PC-3 (cell line): ENCODE measurements at regions of chr5 and their contacts with region 1.

Region 1: GRCh38 chr5:157743163-157744050 is at the start of gene LSM11:
- DNase-seq: peak; percentile 97
- ATAC-seq: peak; percentile 88
- H3K4me3 ChIP-seq: peak within 1 kb of the TSS; percentile 89
- H3K27ac ChIP-seq: no peak within 1 kb of the TSS
- H3K4me1 ChIP-seq: peaks cover 28% of the 10 kb centered on the region
- H3K27me3 ChIP-seq: no peaks in the 10 kb centered on the region
- CTCF ChIP-seq: peak; percentile 100
- total RNA-seq, gene LSM11: 5.0 and 5.1 TPM in 2 replicates

Region 2: GRCh38 chr5:157148734-157149615 is 594.4 kb before region 1 on chr5:
- CTCF ChIA-PET with region 1: no interaction called
- POLR2A ChIA-PET with region 1: no interaction called
- intact Hi-C with region 1: loop called (anchors 5 kb)
- DNase-seq: peak; percentile 95
- ATAC-seq: peak; percentile 95
- H3K4me3 ChIP-seq: no peak overlapping the region
- H3K27ac ChIP-seq: no peak overlapping the region
- H3K4me1 ChIP-seq: no peaks in the 10 kb centered on the region
- H3K27me3 ChIP-seq: peaks cover 11% of the 10 kb centered on the region; the same call in 1 of the 2 replicates
- CTCF ChIP-seq: peak; percentile 99

Region 3: DNA sequence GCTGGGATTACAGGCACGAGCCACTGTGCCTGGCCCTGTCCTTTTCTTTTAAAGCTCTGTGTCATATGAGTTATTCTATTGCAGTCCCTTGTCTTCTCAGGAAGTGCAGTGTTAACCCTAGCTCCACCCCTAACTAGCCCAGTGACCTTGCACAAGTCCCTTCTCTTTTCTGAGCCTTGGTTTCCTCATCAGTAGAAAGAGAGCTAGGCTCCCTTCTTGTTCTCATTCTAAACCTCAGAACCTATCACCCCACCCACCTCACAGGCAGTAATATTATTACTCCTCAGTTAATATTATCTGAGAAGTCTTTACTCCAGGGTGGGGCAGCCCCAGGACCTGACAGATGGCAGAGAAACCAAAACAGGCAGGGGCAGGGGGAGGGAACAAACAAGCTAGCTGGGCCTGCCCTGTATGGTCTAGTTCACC is 470.3 kb before region 1 on chr5:
- CTCF ChIA-PET with region 1: no interaction called
- POLR2A ChIA-PET with region 1: no interaction called
- intact Hi-C with region 1: no loop called
- DNase-seq: no peak
- ATAC-seq: peak; percentile 34; the same call in 1 of the 2 replicates
- H3K4me3 ChIP-seq: no peak overlapping the region
- H3K27ac ChIP-seq: no peak overlapping the region
- H3K4me1 ChIP-seq: no peaks in the 10 kb centered on the region
- H3K27me3 ChIP-seq: no peaks in the 10 kb centered on the region
- CTCF ChIP-seq: no peak

Region 4: GRCh38 chr5:157328277-157328912 is 415.0 kb before region 1 on chr5:
- CTCF ChIA-PET with region 1: interaction called, 16 read pairs
- POLR2A ChIA-PET with region 1: no interaction called
- intact Hi-C with region 1: loop called (anchors 1 kb)
- DNase-seq: peak; percentile 90
- ATAC-seq: peak; percentile 100
- H3K4me3 ChIP-seq: peak overlapping the region; percentile 61
- H3K27ac ChIP-seq: no peak overlapping the region
- H3K4me1 ChIP-seq: peaks cover 13% of the 10 kb centered on the region
- H3K27me3 ChIP-seq: no peaks in the 10 kb centered on the region
- CTCF ChIP-seq: peak; percentile 99

Region 5: GRCh38 chr5:157431544-157432200 is 311.7 kb before region 1 on chr5:
- CTCF ChIA-PET with region 1: no interaction called
- POLR2A ChIA-PET with region 1: no interaction called
- intact Hi-C with region 1: loop called (anchors 1 kb)
- DNase-seq: peak; percentile 90
- ATAC-seq: peak; percentile 96
- H3K4me3 ChIP-seq: no peak overlapping the region
- H3K27ac ChIP-seq: no peak overlapping the region; the same call in 1 of the 2 replicates
- H3K4me1 ChIP-seq: peaks cover 8% of the 10 kb centered on the region
- H3K27me3 ChIP-seq: no peaks in the 10 kb centered on the region
- CTCF ChIP-seq: peak; percentile 88

Region 6: DNA sequence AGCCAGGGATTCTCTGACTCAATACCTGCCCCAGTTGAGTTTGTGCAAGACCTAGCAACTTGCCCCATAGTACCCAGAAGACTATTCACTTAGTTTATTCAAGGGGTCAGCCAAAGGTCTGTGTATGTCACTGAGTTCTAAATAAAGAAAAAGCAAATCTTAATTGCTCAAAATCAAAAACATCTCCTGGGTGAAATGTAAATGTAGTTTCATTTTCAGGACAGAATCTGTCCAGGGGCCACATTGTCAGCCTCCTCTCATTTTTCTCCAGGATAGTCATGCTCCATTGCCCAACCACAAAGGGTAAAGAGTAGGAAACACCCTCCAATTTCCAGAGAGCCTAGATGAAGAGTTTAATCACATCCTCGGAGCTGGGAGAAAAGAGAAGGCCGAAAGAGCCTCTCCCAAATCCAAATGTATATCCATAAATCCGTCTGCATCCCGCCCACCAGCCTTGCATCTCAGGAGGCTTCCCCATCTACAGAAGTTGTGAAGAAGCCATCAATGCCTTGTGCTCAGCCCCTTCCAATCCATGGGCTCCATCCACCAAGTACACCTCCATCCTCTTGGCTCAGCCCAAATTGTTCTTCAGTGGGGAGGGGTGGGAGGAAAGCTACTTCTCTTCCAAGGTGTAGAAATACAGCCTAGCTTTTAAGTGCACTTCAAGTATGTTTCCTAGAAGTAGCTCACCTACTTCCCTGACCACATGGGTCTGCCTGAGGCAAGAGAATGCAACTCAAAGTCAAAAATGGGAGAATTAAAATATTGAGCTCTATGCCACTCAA is 194.7 kb before region 1 on chr5:
- CTCF ChIA-PET with region 1: interaction called, 16 read pairs
- POLR2A ChIA-PET with region 1: no interaction called
- intact Hi-C with region 1: no loop called
- DNase-seq: peak; percentile 81
- ATAC-seq: no peak
- H3K4me3 ChIP-seq: peak overlapping the region; percentile 1; the same call in 1 of the 2 replicates
- H3K27ac ChIP-seq: peak overlapping the region; percentile 70
- H3K4me1 ChIP-seq: peaks cover 39% of the 10 kb centered on the region
- H3K27me3 ChIP-seq: no peaks in the 10 kb centered on the region
- CTCF ChIP-seq: no peak

Region 7: GRCh38 chr5:157648275-157648990 is 95.0 kb before region 1 on chr5:
- CTCF ChIA-PET with region 1: no interaction called
- POLR2A ChIA-PET with region 1: no interaction called
- intact Hi-C with region 1: no loop called
- DNase-seq: peak; percentile 32
- ATAC-seq: peak; percentile 58
- H3K4me3 ChIP-seq: no peak overlapping the region
- H3K27ac ChIP-seq: no peak overlapping the region
- H3K4me1 ChIP-seq: peaks cover 10% of the 10 kb centered on the region
- H3K27me3 ChIP-seq: no peaks in the 10 kb centered on the region
- CTCF ChIP-seq: no peak

Region 8: DNA sequence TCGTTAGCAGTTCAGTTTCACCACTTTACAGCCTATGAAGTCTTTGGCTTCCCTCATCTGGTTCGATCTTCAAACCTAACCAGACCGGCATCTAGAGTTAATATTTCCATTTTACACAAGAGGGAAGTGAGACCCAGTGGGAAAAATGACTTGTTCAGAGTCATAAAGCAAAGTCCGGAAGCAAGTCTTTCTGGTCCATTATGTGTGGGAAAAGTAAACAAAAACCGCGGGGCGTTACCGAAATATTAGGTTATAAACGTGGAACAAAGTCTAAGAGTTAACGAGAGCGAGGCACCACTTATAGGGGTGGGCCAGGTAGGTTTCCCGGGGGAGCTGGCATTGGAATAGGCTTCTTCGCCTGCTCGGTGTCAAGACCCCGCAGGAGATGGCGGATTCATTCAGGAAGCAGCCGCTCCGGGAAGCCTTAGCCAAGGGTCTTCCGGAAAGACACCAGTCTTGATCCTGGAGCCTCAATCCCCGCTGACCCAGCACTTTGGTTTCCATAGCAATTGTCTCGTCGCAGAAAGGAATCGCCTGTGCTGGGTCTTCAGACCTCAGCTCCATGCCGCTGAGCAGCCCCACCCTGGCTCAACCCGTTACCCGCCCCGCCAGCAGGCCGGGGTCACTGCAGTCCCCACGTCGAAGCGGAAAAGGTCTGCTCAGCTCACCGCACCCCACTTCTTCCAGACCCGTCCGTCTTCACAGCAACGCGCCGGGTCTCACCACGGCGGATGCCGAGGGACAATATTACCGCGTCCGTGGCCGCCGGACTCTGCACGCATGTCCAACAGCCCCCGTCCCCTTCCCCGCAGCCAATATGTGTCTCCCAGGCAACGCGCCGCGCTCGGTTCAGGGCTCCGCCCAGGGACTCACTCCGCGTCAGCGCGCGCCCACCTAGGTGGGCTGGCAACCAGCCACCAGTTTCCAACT is 72.5 kb before region 1 on chr5 and contains the start of gene C5orf52:
- CTCF ChIA-PET with region 1: interaction called, 10 read pairs
- POLR2A ChIA-PET with region 1: no interaction called
- intact Hi-C with region 1: loop called (anchors 1 kb)
- DNase-seq: peak; percentile 96
- ATAC-seq: peak; percentile 58
- H3K4me3 ChIP-seq: peak within 1 kb of the TSS; percentile 64
- H3K27ac ChIP-seq: peak within 1 kb of the TSS; percentile 91
- H3K4me1 ChIP-seq: peaks cover 29% of the 10 kb centered on the region
- H3K27me3 ChIP-seq: no peaks in the 10 kb centered on the region
- CTCF ChIP-seq: no peak
- total RNA-seq, gene C5orf52: 0.84 TPM in 1 of 2 replicates, not detected in the other

Region 9: GRCh38 chr5:157772127-157772526 is 28.7 kb after region 1 on chr5:
- CTCF ChIA-PET with region 1: interaction called, 10 read pairs
- POLR2A ChIA-PET with region 1: no interaction called
- intact Hi-C with region 1: no loop called
- DNase-seq: no peak
- ATAC-seq: no peak
- H3K4me3 ChIP-seq: no peak overlapping the region
- H3K27ac ChIP-seq: no peak overlapping the region
- H3K4me1 ChIP-seq: peaks cover 6% of the 10 kb centered on the region
- H3K27me3 ChIP-seq: no peaks in the 10 kb centered on the region
- CTCF ChIP-seq: no peak